ENCODE measurements at regions of chr9 and their contacts with region 1.

Region 1: GRCh38 chr9:70352802-70353201 is 61.7 kb downstream of the KLF9 start:
- DNase-seq: peak; percentile 14
- H3K4me3 Mint-ChIP-seq: no peak overlapping the region
- H3K27ac Mint-ChIP-seq: no peak overlapping the region
- H3K4me1 Mint-ChIP-seq: peaks cover 7% of the 10 kb centered on the region
- H3K27me3 Mint-ChIP-seq: no peaks in the 10 kb centered on the region
- CTCF ChIP-seq: peak; percentile 26

Region 2: DNA sequence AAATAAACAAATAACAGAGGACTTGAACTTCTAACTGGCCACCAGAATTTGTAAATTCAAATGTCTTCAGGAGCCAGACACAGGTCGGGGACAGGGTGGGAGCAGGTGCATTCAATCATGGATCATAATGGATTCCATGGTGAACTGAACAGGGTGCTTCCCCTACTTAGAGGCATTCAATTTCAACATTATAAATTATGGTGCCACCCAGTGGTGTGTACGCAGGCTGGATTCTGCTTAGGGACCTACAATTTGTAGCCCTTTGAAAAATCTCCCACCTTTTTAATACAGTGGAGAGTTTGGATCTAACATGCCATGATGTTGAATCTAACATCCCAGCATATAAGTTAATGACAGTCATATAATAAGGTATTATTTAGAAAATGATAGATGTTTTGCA is 39.4 kb after region 1 on chr9:
- CTCF ChIA-PET with region 1: interaction called, 3 read pairs
- POLR2A ChIA-PET with region 1: no interaction called
- intact Hi-C with region 1: loop called (anchors 5 kb)
- DNase-seq: peak; percentile 18
- H3K4me3 Mint-ChIP-seq: no peak overlapping the region
- H3K27ac Mint-ChIP-seq: no peak overlapping the region
- H3K4me1 Mint-ChIP-seq: peaks cover 21% of the 10 kb centered on the region
- H3K27me3 Mint-ChIP-seq: no peaks in the 10 kb centered on the region
- CTCF ChIP-seq: peak; percentile 13

Region 3: DNA sequence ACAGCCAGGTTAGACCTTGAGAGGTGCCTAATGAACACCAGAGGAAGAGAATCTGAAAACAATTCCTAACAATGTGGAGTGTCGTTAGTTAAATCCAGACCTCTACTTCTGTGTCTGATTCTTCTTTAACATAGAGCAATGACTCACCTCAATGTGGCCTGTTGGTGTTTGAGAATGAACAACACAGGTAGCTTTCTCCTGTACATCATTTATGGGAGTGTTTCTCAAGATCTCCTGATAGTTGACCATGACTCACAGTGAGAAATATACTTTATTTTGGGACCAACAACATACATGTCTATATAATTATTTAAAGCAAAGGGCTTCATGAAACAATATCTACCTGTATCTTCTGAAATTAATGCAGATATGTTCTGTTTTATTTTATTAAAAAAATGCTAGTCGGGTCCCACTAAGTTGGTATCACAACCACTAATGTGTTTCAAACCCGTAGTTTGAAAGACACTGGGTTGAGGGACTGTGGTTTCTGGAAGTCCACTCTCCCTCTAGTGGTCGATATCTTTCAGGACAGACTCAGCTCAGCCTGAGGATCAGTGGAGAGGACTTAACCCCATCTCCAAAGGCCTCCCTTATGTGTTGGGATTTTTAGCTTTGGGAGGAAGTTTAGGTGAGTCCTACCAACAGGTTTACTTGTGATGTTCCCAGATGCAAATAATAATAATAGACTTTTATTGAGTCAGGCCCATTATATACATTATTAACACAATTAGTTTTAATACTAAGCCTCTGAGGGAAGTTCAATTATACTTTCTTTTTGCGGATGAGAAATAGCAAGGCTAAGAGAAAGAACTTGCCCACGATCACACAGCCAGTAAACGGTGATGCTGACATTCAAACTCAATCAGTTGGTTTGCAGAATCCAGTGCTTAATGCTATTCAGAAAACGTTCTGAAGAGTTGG is 131.7 kb after region 1 on chr9:
- CTCF ChIA-PET with region 1: no interaction called
- POLR2A ChIA-PET with region 1: interaction called, 5 read pairs
- intact Hi-C with region 1: loop called (anchors 5 kb)
- DNase-seq: peak; percentile 83
- H3K4me3 Mint-ChIP-seq: no peak overlapping the region
- H3K27ac Mint-ChIP-seq: peak overlapping the region; percentile 99
- H3K4me1 Mint-ChIP-seq: peaks cover 39% of the 10 kb centered on the region
- H3K27me3 Mint-ChIP-seq: no peaks in the 10 kb centered on the region
- CTCF ChIP-seq: peak; percentile 68

Region 4: DNA sequence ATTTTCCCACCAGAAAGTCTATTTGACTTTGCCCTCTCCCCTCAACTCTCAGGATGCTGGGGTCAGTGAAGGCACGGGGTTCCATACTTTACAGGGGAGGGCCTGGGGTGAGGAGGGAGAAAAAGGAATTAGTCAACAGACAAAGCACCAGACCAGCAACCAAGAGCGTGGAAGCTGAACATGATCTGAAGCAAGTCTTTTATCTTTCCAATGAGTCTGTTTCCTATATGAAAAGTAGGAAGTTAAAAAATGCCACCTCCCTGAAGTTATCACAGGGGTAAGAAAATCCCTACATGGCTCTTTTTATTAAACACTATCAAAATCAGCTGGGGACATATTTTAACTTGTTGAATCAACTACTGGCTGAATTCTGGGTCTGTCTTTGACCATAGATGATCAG is 431.7 kb after region 1 on chr9:
- CTCF ChIA-PET with region 1: no interaction called
- POLR2A ChIA-PET with region 1: no interaction called
- intact Hi-C with region 1: no loop called
- DNase-seq: no peak
- H3K4me3 Mint-ChIP-seq: no peak overlapping the region
- H3K27ac Mint-ChIP-seq: no peak overlapping the region
- H3K4me1 Mint-ChIP-seq: no peaks in the 10 kb centered on the region
- H3K27me3 Mint-ChIP-seq: no peaks in the 10 kb centered on the region
- CTCF ChIP-seq: no peak